ENCODE measurements at regions of chr17 and their contacts with region 1.

Region 1: DNA sequence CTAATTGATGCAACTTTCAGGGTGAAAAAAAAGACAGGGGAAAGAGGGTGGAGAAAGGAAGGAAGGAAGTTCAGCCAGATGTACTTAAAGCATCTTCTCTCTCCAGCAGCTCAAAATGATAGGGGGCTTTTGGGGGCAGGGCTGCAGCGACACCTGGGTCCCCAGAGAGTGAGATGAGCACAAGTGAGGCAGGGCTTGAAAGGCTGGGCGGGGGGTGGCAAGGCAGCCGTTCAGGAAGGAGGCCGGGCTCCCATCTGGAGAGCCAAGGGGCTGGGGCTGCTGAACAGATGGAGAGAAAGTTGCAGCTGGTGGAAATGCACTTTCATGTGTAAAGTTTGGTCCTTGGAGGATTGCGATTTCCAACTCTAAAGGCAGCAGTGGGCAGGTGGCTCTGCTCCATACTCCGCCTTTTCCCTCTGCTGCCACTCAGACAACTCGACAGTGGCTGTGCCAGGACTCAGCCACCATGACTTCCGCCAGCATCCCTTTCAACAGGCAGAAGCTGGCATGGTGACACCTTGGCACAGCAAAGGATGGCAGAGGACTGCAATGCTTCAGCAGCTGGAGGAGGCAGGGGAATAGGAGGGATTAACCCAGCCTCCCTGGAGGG is 7.7 kb downstream of the SLC35B1 start:
- DNase-seq: no peak
- CTCF ChIP-seq: no peak

Region 2: GRCh38 chr17:49496183-49496866 is 203.7 kb before region 1 on chr17:
- CTCF ChIA-PET with region 1: no interaction called
- POLR2A ChIA-PET with region 1: no interaction called
- DNase-seq: peak; percentile 89
- CTCF ChIP-seq: peak; percentile 92

Region 3: GRCh38 chr17:49775543-49776260 is 75.6 kb after region 1 on chr17:
- CTCF ChIA-PET with region 1: interaction called, 10 read pairs
- POLR2A ChIA-PET with region 1: no interaction called
- DNase-seq: no peak
- CTCF ChIP-seq: no peak